ENCODE measurements at regions of chr5 and their contacts with region 1.

Region 1: DNA sequence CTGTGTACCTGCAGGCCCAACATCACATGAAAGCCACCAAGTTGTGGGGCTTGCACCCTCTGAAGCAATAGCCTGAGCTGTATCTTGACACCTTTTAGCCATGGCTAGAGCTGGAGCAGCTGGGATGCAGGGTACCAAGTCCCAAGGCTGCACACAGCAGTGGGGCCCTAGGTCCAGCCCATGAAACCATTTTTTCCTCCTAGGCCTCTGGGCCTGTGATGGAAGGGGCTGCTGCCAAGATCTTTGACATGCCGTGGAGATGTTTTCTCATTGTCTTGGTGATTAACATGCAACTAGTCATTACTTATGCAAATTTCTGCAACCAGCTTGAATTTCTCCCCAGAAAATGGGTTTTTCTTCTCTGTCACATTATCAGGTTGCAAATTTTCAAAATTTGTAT is 387.2 kb upstream of the RIOK2 start:
- DNase-seq: no peak
- H3K4me3 ChIP-seq: no peak overlapping the region
- H3K27ac ChIP-seq: no peak overlapping the region
- H3K4me1 ChIP-seq: no peaks in the 10 kb centered on the region
- H3K27me3 ChIP-seq: no peaks in the 10 kb centered on the region
- CTCF ChIP-seq: no peak
- POLR2A ChIP-seq: no peak

Region 2: DNA sequence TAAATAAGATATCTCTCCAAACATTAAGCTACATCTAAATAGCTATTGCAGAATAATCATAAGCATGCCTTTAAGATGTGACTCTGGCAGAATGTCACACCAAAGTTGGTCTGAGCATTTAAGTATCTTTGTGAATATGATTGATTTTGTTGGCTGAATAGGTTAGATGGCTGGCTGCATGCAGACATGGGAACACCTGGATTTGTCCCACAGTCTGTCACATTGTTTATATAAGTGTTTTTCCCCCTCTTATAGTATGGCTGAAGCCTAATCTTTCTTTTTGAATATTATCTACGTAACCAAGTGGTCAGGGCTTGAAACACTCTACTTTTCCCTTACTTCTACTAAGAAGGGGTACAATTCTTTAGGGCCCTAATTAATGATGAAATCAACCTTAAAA is 1173.4 kb before region 1 on chr5:
- intact Hi-C with region 1: loop called (anchors 5 kb)
- DNase-seq: no peak
- H3K4me3 ChIP-seq: no peak overlapping the region
- H3K27ac ChIP-seq: no peak overlapping the region
- H3K4me1 ChIP-seq: no peaks in the 10 kb centered on the region
- H3K27me3 ChIP-seq: no peaks in the 10 kb centered on the region
- CTCF ChIP-seq: no peak
- POLR2A ChIP-seq: no peak

Measured in vagina (tissue), 2 donors.